ENCODE measurements at regions of chr22 and their contacts with region 1.

Region 1: GRCh38 chr22:39490135-39490798 is 11.8 kb upstream of the MIEF1 start:
- DNase-seq: peak; percentile 90
- CTCF ChIP-seq: no peak

Region 2: DNA sequence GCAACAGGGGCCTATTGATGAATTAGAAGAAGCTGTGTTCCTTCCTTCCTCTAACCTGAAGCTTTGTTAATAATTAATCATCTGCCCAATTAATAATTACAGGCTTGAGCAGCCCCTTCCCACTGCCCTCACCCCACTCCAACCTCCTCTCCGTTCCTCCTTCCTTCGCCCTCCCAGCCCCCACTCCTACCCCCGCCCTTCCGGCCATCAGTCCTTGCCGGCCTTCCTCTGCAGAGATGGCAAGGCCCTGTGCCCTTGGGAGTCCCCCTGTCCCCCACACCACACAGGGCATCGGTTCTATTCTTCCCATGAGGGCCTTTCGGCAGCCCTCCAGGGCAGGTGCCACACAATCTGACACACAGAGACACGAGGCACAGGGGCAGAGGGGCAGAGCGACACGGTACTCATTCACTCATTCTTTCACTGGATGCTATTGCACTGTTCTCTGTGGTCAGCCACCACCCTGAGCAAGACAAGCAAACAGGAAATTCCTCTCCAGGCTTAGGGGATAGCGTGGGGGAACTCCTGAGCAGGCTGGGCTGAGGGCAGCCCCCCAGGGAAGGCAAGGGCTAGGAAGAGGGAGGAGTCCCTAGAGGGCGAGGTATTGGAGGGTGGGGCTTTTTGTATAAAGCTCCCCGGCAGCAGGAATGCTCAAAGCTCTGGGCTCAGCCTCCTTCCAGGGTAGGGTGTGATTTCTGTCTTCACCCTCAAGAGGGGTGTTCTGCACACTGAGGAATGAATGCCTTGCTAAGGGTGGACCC is 18.7 kb before region 1 on chr22:
- CTCF ChIA-PET with region 1: interaction called, 46 read pairs
- POLR2A ChIA-PET with region 1: no interaction called
- DNase-seq: peak; percentile 61
- CTCF ChIP-seq: no peak

Region 3: DNA sequence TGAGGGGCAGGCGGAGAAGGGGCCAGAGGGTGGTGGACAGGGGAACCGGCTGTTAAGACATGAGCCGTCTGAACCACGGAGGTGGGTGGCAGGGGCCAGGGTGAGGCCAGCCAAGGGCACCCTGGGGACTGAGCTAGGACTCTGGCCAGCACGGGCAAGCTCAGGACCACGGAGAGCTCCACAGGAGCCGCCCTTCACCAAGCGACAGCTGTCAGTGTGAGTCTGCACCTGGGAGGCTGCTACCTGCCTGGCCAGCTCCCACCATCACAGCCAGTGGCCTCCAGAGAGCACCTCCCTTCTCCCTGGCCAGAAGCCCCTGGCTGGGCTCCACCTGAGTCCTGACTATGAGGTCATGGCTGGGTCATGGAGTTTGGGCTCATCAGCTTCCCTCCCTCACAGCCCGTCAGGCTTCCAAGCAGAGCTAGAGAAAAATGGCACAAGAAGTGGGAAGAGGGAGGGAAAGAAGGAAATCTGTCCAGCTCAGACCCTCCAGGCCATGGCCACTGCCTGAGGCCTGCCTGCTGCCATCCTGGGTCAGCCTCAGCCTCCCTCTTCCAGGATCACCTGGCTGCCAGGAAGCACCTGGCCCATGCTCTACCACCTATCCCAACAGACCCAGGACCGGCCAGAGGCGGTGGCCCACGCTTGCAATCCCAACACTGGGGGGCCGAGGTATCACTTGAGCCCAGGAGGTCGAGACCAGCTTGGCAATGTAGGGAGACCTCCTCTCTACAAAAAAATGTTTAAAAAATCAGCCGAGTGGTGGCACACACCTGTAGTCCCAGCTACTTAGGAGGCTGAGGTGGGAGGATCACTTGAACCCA is 11.6 kb before region 1 on chr22:
- CTCF ChIA-PET with region 1: interaction called, 46 read pairs
- POLR2A ChIA-PET with region 1: no interaction called
- DNase-seq: no peak
- CTCF ChIP-seq: no peak

Region 4: DNA sequence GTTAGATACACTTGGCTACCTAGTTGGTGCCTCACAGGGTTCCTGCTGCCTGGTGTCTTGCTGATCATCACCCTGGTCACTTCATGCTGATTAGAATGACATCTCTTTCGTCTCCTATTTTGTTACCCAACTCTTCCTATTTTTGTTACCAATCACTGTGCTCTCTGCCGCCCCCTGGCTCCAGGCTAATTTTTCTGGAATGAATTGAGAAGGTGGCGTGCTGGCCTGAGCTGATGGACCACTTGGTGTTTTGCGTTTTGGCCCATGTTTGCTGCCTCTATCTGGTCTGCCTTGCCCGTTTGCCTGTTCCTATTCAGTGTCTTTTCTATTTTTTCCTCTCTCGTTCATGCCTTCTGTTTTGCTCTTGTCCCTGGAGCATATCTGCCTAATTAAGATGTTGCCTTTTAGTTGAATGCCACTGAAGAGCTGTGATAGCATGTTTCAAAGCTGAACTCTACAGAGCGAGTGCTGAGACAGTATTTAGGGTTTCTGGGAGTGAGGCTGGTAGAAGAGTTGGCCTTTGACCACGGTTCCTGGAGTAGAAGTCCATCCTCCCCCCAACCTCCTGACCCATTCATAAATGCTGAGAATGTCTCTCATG is 24.2 kb after region 1 on chr22:
- CTCF ChIA-PET with region 1: interaction called, 166 read pairs
- POLR2A ChIA-PET with region 1: interaction called, 5 read pairs
- DNase-seq: no peak
- CTCF ChIP-seq: peak; percentile 77

Region 5: DNA sequence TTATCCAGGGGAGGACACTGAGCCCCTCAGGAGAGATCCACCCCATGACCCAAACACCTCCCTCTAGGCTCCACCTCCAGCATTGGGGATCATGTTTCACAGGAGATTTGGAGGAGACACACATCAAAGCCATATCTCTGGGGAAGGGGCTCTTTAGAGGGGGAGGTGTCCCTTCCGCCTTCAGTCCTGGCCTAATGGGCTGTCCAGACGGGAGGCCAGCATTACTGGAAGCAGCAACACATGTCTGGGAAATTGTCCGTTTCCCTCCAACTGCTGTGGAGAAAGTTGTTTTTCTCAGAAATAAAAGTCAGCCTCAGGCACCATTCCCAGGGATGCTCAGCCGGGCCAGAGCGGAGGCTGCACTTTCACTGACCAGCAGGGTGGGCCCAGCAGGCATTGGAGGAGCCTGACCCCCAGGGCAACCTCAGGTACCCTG is 89.8 kb after region 1 on chr22:
- CTCF ChIA-PET with region 1: no interaction called
- POLR2A ChIA-PET with region 1: no interaction called
- DNase-seq: no peak
- CTCF ChIP-seq: no peak

Measured in GM10248 (cell line).